AG04450 (cell line): ENCODE measurements at regions of chr12 and their contacts with region 1.

Region 1: DNA sequence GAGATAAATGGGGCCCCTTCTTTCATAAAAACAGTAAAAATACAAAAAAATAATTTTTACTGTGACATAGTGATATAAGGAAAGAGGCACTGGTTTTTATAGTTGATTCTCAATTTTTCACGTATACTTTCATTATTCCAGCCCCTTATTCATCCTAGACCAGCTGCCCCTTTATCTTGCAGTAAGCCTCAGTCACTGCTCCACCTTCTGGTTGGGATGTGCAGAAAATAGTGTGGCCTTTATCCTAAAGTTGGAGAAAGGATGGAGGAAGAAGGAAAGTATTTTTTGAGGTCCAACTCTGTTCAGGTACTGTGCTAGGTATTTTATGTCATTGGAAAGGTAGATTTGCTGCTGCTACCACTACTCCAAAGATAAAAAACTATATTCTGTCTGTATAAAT is 172.7 kb downstream of the ANO6 start:
- DNase-seq: peak; percentile 30
- H3K4me3 ChIP-seq: no peak overlapping the region
- H3K27ac ChIP-seq: no peak overlapping the region
- H3K27me3 ChIP-seq: no peaks in the 10 kb centered on the region
- CTCF ChIP-seq: peak; percentile 90

Region 2: GRCh38 chr12:45177082-45177481 is 211.5 kb before region 1 on chr12:
- CTCF ChIA-PET with region 1: interaction called, 55 read pairs
- POLR2A ChIA-PET with region 1: no interaction called
- DNase-seq: no peak
- H3K4me3 ChIP-seq: no peak overlapping the region
- H3K27ac ChIP-seq: no peak overlapping the region
- H3K27me3 ChIP-seq: no peaks in the 10 kb centered on the region
- CTCF ChIP-seq: no peak

Region 3: GRCh38 chr12:45215419-45216229 is 172.9 kb before region 1 on chr12 and contains the start of gene ANO6:
- CTCF ChIA-PET with region 1: interaction called, 25 read pairs
- POLR2A ChIA-PET with region 1: no interaction called
- DNase-seq: peak; percentile 68
- H3K4me3 ChIP-seq: peak within 1 kb of the TSS; percentile 64
- H3K27ac ChIP-seq: peak within 1 kb of the TSS; percentile 82
- H3K27me3 ChIP-seq: no peaks in the 10 kb centered on the region
- CTCF ChIP-seq: peak; percentile 55
- polyA plus RNA-seq, gene ANO6: 44.0 and 51.9 TPM in 2 replicates

Region 4: GRCh38 chr12:45336331-45337064 is 52.0 kb before region 1 on chr12:
- CTCF ChIA-PET with region 1: interaction called, 18 read pairs
- POLR2A ChIA-PET with region 1: no interaction called
- DNase-seq: peak; percentile 93
- H3K4me3 ChIP-seq: 0 out of 2 replicates have a peak overlapping the region, but pooled peaks have one; percentile 25
- H3K27ac ChIP-seq: peak overlapping the region; percentile 90
- H3K27me3 ChIP-seq: no peaks in the 10 kb centered on the region
- CTCF ChIP-seq: no peak

Region 5: DNA sequence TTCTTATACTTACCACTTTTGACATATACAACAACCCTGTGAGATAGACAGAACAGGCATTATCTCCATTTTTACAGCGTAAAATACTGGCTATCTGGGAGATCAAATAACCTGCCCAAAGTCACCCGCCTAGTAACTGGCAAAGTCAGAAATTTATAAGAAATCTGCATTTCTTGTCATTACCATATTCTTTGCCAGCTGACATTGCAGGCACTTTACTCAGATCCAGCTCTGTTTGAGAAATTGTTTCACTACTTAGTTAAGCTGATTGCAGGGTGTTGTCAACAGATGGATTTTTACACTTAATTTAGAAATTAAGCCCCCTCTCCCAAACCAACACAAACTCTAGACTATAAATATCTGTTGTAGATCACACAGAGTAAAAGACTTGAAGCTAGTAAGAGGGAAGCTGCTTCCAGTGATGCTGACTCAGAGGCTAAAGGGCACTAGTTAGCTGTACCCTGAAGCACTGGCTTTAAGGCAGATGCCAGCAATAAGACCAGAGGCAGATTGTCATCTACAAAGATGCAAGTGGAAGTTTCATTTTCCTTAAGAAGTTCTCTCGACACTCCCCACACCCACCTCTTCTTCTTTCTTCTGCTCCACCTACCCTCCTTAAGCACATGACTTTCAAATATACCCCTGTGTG is 19.6 kb before region 1 on chr12:
- CTCF ChIA-PET with region 1: interaction called, 11 read pairs
- POLR2A ChIA-PET with region 1: no interaction called
- DNase-seq: peak; percentile 23
- H3K4me3 ChIP-seq: no peak overlapping the region
- H3K27ac ChIP-seq: no peak overlapping the region
- H3K27me3 ChIP-seq: no peaks in the 10 kb centered on the region
- CTCF ChIP-seq: no peak

Region 6: GRCh38 chr12:45745861-45746277 is 357.3 kb after region 1 on chr12:
- CTCF ChIA-PET with region 1: interaction called, 12 read pairs
- POLR2A ChIA-PET with region 1: no interaction called
- DNase-seq: no peak
- H3K4me3 ChIP-seq: no peak overlapping the region
- H3K27ac ChIP-seq: no peak overlapping the region
- H3K27me3 ChIP-seq: no peaks in the 10 kb centered on the region
- CTCF ChIP-seq: peak; percentile 32

Region 7: DNA sequence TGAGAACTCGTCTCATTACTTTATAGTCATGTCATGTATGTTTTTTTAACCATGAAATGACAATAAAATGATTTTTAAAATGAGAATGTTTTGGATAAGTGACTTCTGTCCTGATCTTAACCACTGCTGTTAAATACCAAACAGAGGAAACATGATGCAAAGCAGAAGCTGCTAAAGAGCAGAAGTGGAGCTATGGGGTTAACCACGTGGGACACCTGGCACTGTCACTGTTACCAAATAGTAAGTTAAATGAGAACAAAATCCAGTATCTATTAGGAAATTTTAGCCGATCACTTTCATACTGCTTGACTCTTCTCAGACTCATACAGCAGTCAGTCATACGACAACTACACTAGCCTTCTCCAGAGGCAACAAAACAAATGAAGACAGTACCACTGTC is 519.4 kb after region 1 on chr12:
- CTCF ChIA-PET with region 1: no interaction called
- POLR2A ChIA-PET with region 1: no interaction called
- DNase-seq: no peak
- H3K4me3 ChIP-seq: no peak overlapping the region
- H3K27ac ChIP-seq: no peak overlapping the region
- H3K27me3 ChIP-seq: no peaks in the 10 kb centered on the region
- CTCF ChIP-seq: no peak